CD14-positive monocyte (primary cell): ENCODE measurements at regions of chr11 and their contacts with region 1.

Region 1: DNA sequence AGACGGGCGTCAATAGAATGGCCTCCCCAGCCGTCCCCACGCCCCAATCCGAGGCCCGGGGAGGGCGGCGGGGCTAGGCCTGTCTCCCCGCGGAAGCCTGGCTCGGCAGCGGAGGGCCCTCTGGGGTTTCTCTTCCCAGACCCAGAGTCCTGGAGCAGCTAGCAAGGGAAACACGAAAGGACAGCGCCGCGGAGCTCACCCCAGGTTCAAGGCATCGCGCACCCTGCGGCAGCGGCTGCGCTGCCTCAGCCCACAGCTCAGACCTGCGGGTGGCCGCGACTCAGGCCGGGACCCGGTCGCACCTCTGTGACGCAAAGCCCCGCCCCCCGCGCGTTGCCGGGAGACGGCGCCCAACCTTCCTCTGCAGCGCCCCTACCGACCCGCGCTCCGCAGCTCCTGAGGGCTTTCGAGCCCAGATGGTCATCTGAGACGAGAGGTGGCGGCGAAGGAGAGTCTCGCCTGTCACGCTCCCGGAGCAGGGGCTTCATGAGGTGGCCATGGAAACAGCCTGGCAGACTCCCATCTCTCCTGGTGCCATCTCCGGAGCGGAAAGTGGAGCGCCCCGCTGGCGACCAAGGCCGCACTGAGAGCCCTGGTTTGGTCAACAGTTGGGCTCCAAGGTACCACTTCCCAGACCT is at the start of gene RNF141:
- DNase-seq: peak; percentile 89 to 92 (median 91)
- H3K4me3 ChIP-seq: peak within 1 kb of the TSS; percentile 74 to 81 (median 78)
- H3K4me3 Mint-ChIP-seq: peak within 1 kb of the TSS; percentile 90 to 94
- H3K27ac ChIP-seq: peak within 1 kb of the TSS; percentile 72 to 78
- H3K27ac Mint-ChIP-seq: peak within 1 kb of the TSS; percentile 88 to 93 (median 91)
- H3K4me1 ChIP-seq: peaks cover 27 to 36% of the 10 kb centered on the region in 2 donors
- H3K4me1 Mint-ChIP-seq: peaks cover 34% of the 10 kb centered on the region
- H3K27me3 ChIP-seq: no peaks in the 10 kb centered on the region
- H3K27me3 Mint-ChIP-seq: no peaks in the 10 kb centered on the region
- CTCF ChIP-seq: peak; percentile 90
- polyA plus RNA-seq, gene RNF141: 19.7 to 114 (median 98.3) TPM

Region 2: DNA sequence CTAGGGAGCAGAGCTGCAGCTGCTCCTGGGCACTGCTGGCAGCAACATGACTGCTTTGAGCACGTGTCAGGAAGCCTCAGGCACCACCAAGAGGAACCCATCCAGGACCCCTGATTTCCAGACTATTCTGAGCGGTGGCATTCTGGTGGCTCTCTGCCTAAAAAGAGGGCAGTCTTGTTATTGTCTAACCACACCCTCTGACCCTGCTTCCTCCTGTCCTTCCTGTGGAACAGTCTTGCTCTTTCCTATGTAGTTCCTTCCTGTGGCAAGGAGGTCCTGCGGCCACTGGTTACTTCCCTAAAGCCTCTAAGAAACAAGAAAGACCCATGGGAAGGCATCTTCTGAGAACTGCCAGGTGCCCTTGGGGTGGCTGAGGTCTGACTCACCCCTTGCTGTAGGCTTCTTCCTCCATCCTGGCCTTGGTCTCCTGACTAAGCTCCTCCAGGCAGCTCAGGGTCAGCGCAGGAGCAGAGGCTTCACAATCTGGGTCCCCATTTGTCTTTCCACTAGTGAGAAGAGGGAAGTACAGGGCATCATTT is 40.5 kb after region 1 on chr11:
- intact Hi-C with region 1: loop called in 1 of 2 experiments (anchors 5 kb)
- DNase-seq: peak; percentile 94 to 99 (median 97)
- H3K4me3 ChIP-seq: peak overlapping the region in 1 of 3 experiments; percentile 59
- H3K4me3 Mint-ChIP-seq: peak overlapping the region; percentile 35 to 46
- H3K27ac ChIP-seq: peak overlapping the region; percentile 60 to 81
- H3K27ac Mint-ChIP-seq: peak overlapping the region; percentile 76 to 97 (median 92)
- H3K4me1 ChIP-seq: peaks cover 59 to 60% of the 10 kb centered on the region in 2 donors
- H3K4me1 Mint-ChIP-seq: peaks cover 59% of the 10 kb centered on the region
- H3K27me3 ChIP-seq: no peaks in the 10 kb centered on the region
- H3K27me3 Mint-ChIP-seq: peaks cover 2 to 3% (median 2%) of the 10 kb centered on the region in 3 donors
- CTCF ChIP-seq: no peak